Activated naive CD4-positive, alpha-beta T cell treated with anti-CD3 and anti-CD28 coated beads for 36 hours (primary cell): ENCODE measurements at regions of chr21 and their contacts with region 1.

Region 1: GRCh38 chr21:29232601-29233546 is 65.8 kb upstream of the BACH1 start:
- DNase-seq: no peak
- H3K4me3 Mint-ChIP-seq: peak overlapping the region; percentile 13
- H3K27ac Mint-ChIP-seq: peak overlapping the region; percentile 79
- H3K4me1 Mint-ChIP-seq: peaks cover 53% of the 10 kb centered on the region
- H3K27me3 Mint-ChIP-seq: peaks cover 4% of the 10 kb centered on the region

Region 2: DNA sequence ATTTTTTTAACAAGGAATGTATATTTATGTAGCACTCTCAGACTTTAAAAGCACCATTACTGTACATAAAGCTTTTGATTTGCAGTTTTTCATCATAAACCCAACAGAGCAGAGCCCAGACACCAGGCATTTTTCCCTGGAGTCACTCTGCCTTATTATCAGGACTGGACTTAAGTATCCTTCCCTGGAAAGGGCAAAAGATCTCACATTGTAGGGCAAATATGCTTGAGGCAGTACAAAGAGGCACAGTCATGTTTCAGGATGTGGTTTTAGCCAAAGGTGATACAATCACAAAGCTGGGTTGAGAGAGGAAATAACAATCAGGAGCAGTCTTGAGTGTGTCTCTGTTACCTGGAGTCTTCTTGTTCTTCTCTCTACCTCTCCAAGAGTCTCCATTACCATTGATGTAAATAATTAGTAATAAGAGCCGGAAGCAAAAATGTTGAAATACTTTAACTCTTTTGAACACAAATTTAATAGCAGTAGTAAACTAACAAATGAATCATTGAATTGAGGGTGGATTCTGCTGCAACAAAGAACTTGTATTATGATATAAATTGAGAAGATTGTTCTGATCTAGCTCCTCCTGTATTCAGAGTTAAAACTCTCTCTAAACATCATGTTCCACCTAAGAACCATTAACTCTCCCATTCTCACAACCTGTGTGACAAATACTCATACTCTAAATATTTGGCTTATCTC is 400.7 kb before region 1 on chr21:
- CTCF ChIA-PET with region 1: no interaction called
- intact Hi-C with region 1: loop called (anchors 2 kb)
- DNase-seq: peak; percentile 36
- H3K4me3 Mint-ChIP-seq: no peak overlapping the region
- H3K27ac Mint-ChIP-seq: no peak overlapping the region
- H3K4me1 Mint-ChIP-seq: peaks cover 57% of the 10 kb centered on the region
- H3K27me3 Mint-ChIP-seq: no peaks in the 10 kb centered on the region

Region 3: DNA sequence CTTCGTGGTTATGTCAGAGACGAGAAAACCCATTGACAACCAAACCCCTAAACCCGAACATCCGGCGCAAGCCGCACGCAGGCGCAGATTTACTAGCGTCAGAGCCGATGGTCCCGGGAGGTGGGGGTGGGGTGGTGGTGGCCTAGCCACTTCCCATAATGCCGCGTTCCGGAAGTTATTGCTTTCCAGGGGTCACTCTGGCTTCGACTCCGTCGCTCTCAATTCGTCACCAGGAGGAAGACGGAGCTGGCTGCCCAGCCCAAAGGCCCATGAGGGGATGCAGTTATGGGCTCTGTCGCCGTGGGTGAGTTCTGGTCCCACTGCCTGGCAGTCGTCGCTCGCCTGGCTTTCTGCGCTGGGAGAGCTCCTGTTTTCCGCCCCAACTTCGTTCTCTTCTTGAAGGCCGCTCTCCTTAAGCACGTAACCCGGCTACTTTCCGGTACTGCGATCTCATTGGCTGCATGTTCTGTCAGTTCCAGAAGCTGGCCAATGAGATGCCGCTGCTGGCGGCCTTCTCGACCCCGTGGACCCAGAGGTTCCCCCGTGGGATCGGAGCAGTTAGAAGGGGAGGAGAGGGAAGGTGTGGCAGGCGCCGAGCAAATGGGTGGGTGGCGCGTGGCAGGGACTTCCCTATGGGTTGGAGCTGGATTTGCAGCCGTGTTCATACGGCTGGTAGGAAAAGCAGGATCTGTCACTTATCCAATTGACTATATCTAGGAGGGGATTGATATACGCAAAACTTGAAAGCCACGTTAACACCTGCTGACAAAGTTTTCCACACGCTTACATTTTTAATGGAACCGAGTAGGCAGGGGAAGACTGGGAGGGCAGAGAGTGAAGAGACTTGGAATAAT is 208.2 kb before region 1 on chr21 and contains the start of gene USP16:
- CTCF ChIA-PET with region 1: no interaction called
- intact Hi-C with region 1: loop called (anchors 5 kb)
- DNase-seq: peak; percentile 95
- H3K4me3 Mint-ChIP-seq: peak within 1 kb of the TSS; percentile 88
- H3K27ac Mint-ChIP-seq: peak within 1 kb of the TSS; percentile 98
- H3K4me1 Mint-ChIP-seq: peaks cover 42% of the 10 kb centered on the region
- H3K27me3 Mint-ChIP-seq: no peaks in the 10 kb centered on the region
- total RNA-seq, gene USP16: 36.1 to 36.7 TPM

Region 4: DNA sequence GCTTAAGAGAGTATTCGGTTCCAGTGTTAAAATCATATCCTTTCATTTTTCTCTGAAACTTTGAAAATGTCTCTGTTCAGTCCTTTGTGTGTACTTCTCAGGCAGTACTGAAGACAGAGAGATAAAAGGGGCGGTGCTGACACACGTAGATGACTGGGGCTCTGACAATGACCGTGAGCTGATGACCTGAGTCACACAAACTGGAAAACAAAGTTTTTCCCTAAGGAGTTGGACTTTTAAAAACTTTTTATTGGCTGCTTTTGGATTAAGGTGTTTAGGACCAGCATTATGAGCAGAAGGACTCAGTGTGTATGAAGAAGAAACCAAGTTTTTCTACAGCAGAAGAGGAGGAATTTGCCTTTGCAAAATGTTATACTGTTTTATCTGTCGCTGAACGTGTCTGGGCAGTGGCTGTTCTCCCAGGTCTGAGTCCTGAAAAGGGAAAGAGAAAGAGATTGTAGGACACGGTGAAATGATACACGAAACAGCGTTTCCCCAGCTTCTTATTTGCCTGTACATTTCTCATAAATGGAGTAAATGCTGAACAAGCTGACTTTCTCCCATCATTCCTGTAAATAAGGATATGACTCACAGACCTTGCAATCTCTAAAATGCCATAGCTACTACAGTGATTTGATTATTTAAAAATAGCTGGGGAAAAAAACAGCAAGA is 50.9 kb before region 1 on chr21:
- CTCF ChIA-PET with region 1: no interaction called
- intact Hi-C with region 1: loop called (anchors 1 kb)
- DNase-seq: peak; percentile 37
- H3K4me3 Mint-ChIP-seq: peak overlapping the region; percentile 45
- H3K27ac Mint-ChIP-seq: peak overlapping the region; percentile 93
- H3K4me1 Mint-ChIP-seq: peaks cover 14% of the 10 kb centered on the region
- H3K27me3 Mint-ChIP-seq: no peaks in the 10 kb centered on the region

Region 5: DNA sequence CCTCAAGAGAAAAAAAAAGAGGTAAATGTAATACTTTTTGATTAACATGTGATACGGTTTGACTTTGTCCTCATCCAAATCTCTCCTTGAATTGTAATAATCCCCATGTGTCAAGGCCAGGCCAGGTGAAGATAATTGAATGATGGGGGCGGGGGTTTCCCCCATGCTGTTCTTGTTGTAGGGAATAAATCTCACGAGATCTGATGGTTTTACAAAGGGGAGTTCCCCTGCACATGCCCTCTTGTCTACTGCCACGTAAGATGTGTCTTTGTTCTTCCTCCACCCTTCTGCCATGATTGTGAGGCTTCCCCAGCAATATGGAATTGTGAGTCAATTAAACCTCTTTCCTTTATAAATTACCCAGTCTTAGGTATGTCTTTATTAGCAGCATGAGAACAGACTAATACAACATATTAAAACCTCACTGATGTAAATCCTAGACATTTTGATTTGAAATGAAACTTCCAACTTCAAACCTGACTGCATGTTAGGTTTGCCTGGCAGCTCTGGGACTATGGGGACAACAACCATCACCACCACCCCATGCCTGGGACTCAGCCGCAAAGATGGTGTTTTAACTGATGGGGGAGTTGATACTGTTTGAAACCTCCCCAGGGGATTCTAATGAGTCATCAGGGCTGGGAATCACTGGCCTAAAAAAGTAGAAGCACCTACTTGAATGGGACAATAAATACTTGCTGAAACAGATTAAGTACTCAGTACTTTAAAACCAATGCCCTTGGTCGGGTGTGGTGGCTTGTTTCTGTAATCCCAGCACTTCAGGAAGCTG is 33.0 kb after region 1 on chr21:
- CTCF ChIA-PET with region 1: no interaction called
- intact Hi-C with region 1: loop called (anchors 1 kb)
- DNase-seq: peak; percentile 75
- H3K4me3 Mint-ChIP-seq: no peak overlapping the region
- H3K27ac Mint-ChIP-seq: peak overlapping the region; percentile 51
- H3K4me1 Mint-ChIP-seq: peaks cover 15% of the 10 kb centered on the region
- H3K27me3 Mint-ChIP-seq: no peaks in the 10 kb centered on the region

Region 6: DNA sequence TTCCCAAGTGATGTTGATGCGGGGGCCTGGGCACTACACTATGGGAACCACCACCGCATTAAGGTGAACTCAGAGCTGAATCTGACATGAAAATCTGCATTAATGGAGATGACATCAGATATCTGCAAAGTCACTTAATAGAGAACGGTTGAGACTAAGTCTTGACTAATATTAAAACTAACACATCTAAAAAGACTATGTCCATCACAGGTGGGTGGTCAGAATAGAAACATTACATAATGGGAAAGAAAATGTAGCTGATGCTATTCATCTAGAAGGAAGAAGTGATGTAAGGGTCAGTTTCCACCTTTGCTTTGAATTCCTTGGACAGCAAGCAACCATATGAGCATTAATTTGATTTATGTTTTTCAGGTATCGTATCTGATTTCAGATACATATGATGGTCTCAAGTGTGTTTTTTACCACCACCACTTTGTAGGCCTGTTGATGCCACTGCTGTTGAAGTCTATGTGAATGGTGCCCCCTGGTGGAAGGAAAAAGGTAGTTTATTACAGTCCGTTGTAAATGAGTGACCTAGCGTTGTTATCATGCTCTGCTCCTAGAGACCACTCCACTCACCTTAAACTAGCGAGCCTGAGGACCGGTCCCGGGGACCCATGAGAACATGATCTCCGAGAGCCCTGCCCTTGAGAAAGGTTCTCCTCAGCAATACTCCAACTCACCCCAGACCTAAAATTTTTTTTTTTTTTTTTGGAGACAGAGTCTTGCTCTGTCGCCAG is 139.4 kb after region 1 on chr21:
- CTCF ChIA-PET with region 1: interaction called, 3 read pairs
- intact Hi-C with region 1: loop called (anchors 1 kb)
- DNase-seq: peak; percentile 67
- H3K4me3 Mint-ChIP-seq: no peak overlapping the region
- H3K27ac Mint-ChIP-seq: peak overlapping the region; percentile 60
- H3K4me1 Mint-ChIP-seq: peaks cover 25% of the 10 kb centered on the region
- H3K27me3 Mint-ChIP-seq: no peaks in the 10 kb centered on the region

Region 7: GRCh38 chr21:29656504-29657239 is 423.8 kb after region 1 on chr21:
- CTCF ChIA-PET with region 1: no interaction called
- intact Hi-C with region 1: loop called (anchors 1 kb)
- DNase-seq: peak; percentile 21
- H3K4me3 Mint-ChIP-seq: peak overlapping the region; percentile 33
- H3K27ac Mint-ChIP-seq: peak overlapping the region; percentile 83
- H3K4me1 Mint-ChIP-seq: peaks cover 29% of the 10 kb centered on the region
- H3K27me3 Mint-ChIP-seq: peaks cover 9% of the 10 kb centered on the region

Region 8: DNA sequence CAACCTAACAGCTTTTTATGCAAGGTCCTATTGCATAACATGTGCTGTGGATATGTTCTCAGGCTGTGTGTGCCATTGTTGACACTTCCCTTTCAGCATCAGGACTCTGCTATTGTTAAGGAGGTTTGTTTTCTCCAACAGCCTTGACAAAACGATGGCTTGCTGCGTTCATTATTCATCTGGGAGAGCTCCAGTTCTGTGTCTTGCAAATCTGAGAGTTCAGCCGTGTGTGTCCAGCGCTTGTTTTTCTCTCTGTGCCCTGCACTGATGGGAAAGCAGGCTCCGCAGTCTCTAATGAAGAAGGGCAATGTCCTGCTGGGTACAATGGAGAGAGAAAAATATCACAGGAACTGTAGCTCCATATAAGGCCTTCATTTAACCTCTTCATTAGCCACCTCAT is 870.0 kb after region 1 on chr21:
- CTCF ChIA-PET with region 1: no interaction called
- intact Hi-C with region 1: no loop called
- DNase-seq: no peak
- H3K4me3 Mint-ChIP-seq: no peak overlapping the region
- H3K27ac Mint-ChIP-seq: no peak overlapping the region
- H3K4me1 Mint-ChIP-seq: no peaks in the 10 kb centered on the region
- H3K27me3 Mint-ChIP-seq: no peaks in the 10 kb centered on the region